BJ (cell line): ENCODE measurements at regions of chr21 and their contacts with region 1.

Region 1: GRCh38 chr21:16534408-16535101 is 804.8 kb downstream of the USP25 start:
- DNase-seq: no peak
- H3K4me3 ChIP-seq: peak overlapping the region; percentile 31
- H3K27me3 ChIP-seq: no peaks in the 10 kb centered on the region
- CTCF ChIP-seq: no peak

Region 2: DNA sequence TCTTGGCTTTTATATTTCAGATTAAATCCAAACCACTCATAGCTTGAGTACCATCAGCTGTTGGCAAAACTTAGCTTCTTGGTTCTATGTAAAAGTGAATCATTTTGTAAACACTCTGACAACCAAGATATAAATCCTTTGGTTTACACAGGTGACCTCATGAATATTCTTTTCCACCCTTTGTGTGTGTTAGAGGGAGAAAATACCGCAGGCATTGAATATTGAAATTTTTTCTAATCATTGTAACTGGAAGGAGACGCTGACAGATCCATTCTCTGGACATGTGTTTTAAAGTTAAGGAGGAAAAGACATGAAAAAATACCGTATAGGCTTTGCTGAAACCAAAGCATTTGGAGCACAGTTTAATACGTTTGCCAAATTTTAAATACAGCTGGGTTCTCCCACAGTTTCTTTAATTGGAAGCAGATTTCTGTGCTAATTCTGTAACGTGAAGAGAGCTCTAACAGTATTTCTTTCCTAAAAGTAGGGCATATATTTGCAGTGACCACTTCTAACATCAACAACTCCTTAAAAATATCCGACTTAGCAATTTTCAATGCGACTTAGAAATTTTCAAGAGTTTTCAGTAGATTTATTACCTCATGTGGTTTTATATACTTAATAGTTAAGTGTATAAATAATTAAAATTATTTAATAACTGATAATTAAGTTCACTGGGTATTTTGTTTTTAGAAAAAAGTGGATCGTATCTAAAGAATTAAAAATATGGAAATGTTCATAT is 416.5 kb before region 1 on chr21:
- CTCF ChIA-PET with region 1: interaction called, 4 read pairs
- POLR2A ChIA-PET with region 1: interaction called, 20 read pairs
- DNase-seq: peak; percentile 78
- H3K4me3 ChIP-seq: no peak overlapping the region
- H3K27me3 ChIP-seq: no peaks in the 10 kb centered on the region
- CTCF ChIP-seq: no peak

Region 3: GRCh38 chr21:16633831-16634459 is 99.4 kb after region 1 on chr21:
- CTCF ChIA-PET with region 1: no interaction called
- POLR2A ChIA-PET with region 1: interaction called, 11 read pairs
- DNase-seq: no peak
- H3K4me3 ChIP-seq: no peak overlapping the region
- H3K27me3 ChIP-seq: no peaks in the 10 kb centered on the region
- CTCF ChIP-seq: no peak